Gastrocnemius medialis (tissue), 4 donors: ENCODE measurements at regions of chr11 and their contacts with region 1.

Region 1: GRCh38 chr11:2885676-2886081 is at the start of gene CDKN1C:
- DNase-seq: peak; percentile 63 to 82
- ATAC-seq: peak; percentile 76 to 80
- H3K4me3 ChIP-seq: peak within 1 kb of the TSS; percentile 67 to 95 (median 82)
- H3K27ac ChIP-seq: peak within 1 kb of the TSS; percentile 75 to 87 (median 87)
- H3K4me1 ChIP-seq: peaks cover 14 to 26% of the 10 kb centered on the region in 2 donors
- H3K27me3 ChIP-seq: no peaks in the 10 kb centered on the region
- CTCF ChIP-seq: no peak
- POLR2A ChIP-seq: peak; percentile 85 to 95
- total RNA-seq, gene CDKN1C: 22.0 to 56.9 (median 38.5) TPM

Region 2: GRCh38 chr11:2325719-2326118 is 560.0 kb before region 1 on chr11:
- in situ Hi-C with region 1: no loop called
- intact Hi-C with region 1: loop called (anchors 5 kb)
- DNase-seq: peak; percentile 81 to 87
- ATAC-seq: peak; percentile 100
- H3K4me3 ChIP-seq: no peak overlapping the region
- H3K27ac ChIP-seq: peak overlapping the region; percentile 61 to 78 (median 71)
- H3K4me1 ChIP-seq: peaks cover 4 to 5% of the 10 kb centered on the region in 2 donors
- H3K27me3 ChIP-seq: no peaks in the 10 kb centered on the region
- CTCF ChIP-seq: no peak
- POLR2A ChIP-seq: no peak

Region 3: DNA sequence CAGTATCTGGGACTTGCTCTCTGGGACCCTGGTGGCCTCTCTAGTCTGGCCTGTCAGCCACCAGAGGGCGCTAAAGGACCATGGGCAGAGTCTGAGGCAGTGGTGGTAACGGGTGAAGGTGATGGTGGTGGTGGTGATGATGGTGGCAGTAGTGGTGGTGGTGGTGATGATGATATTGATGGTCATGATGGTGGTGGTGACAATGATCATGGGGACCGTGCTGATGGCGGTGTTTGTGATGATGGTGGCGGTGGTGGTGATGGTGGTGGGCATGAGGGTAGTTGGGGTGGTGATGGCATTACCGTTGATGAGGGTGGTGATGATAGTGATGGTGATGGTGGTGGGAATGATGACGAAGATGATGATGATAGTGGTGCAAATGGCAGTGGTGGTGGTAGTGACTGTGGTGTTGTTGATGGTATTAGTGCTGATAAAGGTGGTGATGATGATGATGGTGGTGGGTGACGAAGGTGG is 457.3 kb before region 1 on chr11:
- in situ Hi-C with region 1: loop called in 2 of 4 experiments (anchors 10 to 25 kb)
- intact Hi-C with region 1: loop called (anchors 2 kb)
- DNase-seq: peak in 1 of 2 donors; percentile 50
- ATAC-seq: peak in 1 of 2 donors; percentile 78
- H3K4me3 ChIP-seq: no peak overlapping the region
- H3K27ac ChIP-seq: no peak overlapping the region
- H3K4me1 ChIP-seq: no peaks in the 10 kb centered on the region
- H3K27me3 ChIP-seq: no peaks in the 10 kb centered on the region
- CTCF ChIP-seq: peak; percentile 66 to 88 (median 77)
- POLR2A ChIP-seq: no peak

Region 4: DNA sequence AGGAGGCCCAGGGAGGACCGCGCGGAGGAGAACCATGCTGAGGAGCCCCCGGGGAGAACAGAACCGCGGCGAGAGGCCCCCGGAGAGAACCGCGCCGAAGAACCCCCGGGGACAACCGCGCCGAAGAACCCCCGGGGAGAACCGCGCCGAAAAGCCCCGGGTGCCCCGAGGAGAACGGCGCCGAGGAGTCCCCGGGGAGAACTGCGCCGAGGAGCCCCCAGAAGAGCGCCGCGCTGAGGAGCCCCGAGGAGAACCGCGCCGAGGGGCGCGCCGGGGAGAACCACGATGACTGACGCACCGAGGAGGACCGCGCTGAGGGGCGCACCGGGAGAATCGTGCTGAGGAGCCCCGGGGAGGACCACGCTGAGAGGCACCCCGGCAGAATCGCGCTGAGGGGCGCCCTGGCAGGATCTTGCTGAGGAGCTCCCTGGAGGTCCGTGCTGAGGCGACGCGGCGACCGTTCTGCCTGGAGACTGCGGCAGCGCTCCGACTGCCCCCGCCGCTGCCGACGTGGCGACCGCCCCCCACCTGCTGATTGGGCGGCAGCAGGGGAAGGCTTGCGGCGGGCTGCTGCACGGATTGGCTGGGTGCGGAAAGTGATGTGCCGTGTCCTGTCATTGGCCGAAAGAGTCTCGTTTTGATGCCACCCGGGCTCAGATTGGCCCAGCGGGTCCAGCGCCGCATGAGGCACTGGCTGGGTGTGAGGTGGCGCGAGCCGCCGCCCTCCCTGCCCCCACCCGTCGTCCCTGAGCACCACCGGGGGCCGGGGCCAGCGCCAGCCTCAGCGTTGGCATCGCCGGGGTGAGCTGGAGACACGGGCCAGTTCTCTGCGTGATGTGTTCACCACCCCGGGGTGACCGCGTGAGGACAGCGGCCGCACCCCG is 185.9 kb before region 1 on chr11 and contains the start of gene KCNQ1OT1:
- in situ Hi-C with region 1: loop called in 3 of 4 experiments (anchors 25 kb)
- intact Hi-C with region 1: loop called (anchors 2 kb)
- DNase-seq: peak; percentile 89 to 94
- ATAC-seq: peak; percentile 79 to 83
- H3K4me3 ChIP-seq: peak within 1 kb of the TSS; percentile 73 to 91 (median 78)
- H3K27ac ChIP-seq: peak within 1 kb of the TSS; percentile 89 to 97 (median 92)
- H3K4me1 ChIP-seq: peaks cover 19 to 21% of the 10 kb centered on the region in 2 donors
- H3K27me3 ChIP-seq: no peaks in the 10 kb centered on the region
- CTCF ChIP-seq: no peak
- POLR2A ChIP-seq: peak; percentile 91 to 92
- total RNA-seq, gene KCNQ1OT1: 0.16 to 0.61 (median 0.30) TPM

Region 5: DNA sequence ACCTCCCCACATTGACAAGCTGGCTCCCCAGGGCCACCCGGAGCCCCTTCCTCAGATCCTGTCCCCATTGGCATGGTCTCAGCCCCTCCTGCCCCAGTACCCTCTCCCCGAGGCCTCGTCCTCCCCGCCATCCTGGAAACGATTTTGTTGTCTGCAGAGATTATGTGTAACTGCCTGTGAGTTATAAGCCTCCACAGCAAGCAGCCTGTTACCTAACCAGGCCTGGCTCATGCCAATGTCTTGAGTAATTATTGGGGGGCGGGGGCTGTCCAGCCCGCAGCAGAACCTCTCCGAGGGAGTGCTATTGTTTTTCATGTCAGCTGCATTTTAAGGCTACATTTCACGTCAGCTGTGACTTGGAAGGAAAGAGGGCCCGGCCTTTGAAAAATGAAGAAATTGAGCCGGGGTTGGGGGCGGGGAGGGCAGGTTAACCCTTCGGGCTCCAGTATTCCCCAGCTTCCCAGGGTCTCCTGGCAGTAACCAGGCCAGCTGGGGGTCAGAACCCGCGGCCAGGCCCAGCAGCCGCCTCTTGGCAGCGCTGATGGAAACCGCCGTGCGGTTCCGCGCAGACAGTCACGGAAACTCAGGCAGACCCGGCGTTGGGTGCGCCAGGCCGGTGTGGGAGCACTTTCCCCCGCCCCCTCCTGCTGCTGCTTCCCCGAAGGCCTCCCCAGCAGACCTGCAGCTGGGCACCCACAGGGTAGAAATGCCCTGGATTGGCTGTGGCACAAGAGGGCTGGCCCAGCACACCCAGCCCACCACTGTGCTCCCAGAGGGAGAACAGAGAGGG is 59.6 kb before region 1 on chr11:
- in situ Hi-C with region 1: no loop called
- intact Hi-C with region 1: loop called (anchors 1 kb)
- DNase-seq: peak; percentile 66 to 82
- ATAC-seq: peak; percentile 81 to 84
- H3K4me3 ChIP-seq: peak overlapping the region; percentile 18 to 40 (median 30)
- H3K27ac ChIP-seq: peak overlapping the region; percentile 66 to 81 (median 74)
- H3K4me1 ChIP-seq: peaks cover 28 to 34% of the 10 kb centered on the region in 2 donors
- H3K27me3 ChIP-seq: peaks cover 0 to 6% (median 2%) of the 10 kb centered on the region in 3 donors
- CTCF ChIP-seq: no peak
- POLR2A ChIP-seq: no peak